ENCODE measurements at regions of chr12 and their contacts with region 1.

Region 1: GRCh38 chr12:42332301-42333285 is 6.6 kb downstream of the PPHLN1 start:
- DNase-seq: no peak
- H3K4me3 Mint-ChIP-seq: no peak overlapping the region
- H3K27ac Mint-ChIP-seq: no peak overlapping the region
- H3K4me1 Mint-ChIP-seq: peaks cover 51% of the 10 kb centered on the region
- H3K27me3 Mint-ChIP-seq: no peaks in the 10 kb centered on the region

Region 2: DNA sequence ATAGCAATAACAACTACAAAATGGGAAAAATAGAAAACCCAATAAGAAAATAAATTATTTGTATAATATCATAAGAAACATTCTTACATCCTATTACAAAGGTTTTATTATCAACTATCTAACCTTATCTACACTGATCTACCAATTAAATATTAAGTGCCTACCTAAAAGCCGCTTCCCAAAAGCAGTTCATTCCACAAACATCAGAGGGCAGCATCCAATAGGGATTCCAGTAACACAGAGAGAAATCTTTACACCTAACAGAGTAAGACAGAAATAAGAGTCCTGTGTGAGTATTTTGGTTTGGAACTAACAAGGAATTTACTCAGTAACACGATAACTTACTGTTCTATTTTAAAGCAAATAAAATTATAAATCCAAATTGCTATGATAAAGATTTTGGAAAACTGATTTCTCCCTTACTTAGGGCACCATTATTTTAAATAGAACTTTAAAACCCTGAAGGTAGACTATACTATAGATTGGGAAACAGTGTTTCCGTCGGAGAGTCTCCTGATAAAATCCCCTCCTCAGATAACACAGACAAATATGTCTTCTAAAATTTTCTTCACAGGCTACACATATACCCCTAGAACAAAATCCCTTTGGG is 202.9 kb before region 1 on chr12:
- CTCF ChIA-PET with region 1: interaction called, 3 read pairs
- POLR2A ChIA-PET with region 1: no interaction called
- intact Hi-C with region 1: loop called (anchors 1 kb)
- DNase-seq: no peak
- H3K4me3 Mint-ChIP-seq: no peak overlapping the region
- H3K27ac Mint-ChIP-seq: no peak overlapping the region
- H3K4me1 Mint-ChIP-seq: peaks cover 30% of the 10 kb centered on the region
- H3K27me3 Mint-ChIP-seq: no peaks in the 10 kb centered on the region

Measured in activated CD4-positive, alpha-beta memory T cell treated with anti-CD3 and anti-CD28 coated beads for 36 hours (primary cell).